ENCODE measurements at regions of chr1 and their contacts with region 1.

Region 1: GRCh38 chr1:166855558-166855957 is 16.3 kb downstream of the POGK start:
- DNase-seq: no peak
- ATAC-seq: no peak
- H3K4me3 Mint-ChIP-seq: no peak overlapping the region
- H3K27ac Mint-ChIP-seq: peak overlapping the region; percentile 53
- H3K4me1 Mint-ChIP-seq: peaks cover 29% of the 10 kb centered on the region
- H3K27me3 Mint-ChIP-seq: no peaks in the 10 kb centered on the region
- CTCF ChIP-seq: no peak

Region 2: DNA sequence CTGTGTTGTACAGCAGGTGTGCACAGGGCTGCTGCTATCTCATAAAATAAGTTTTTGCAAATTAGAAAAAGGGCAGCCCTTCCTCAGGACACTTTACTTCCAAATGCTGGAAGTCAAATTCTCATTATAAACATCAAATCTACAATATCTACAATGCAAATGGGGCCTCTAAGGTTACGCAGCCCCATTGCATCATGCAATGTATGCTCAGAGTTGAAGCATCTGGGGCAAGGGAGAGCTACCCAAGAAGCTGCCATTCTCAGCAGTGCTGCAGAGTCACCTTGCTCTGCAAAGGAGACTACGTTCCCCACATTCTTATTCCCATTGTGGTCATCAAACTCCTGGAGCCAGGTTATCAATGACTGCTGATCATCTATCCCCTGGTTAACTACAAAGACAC is 225.2 kb before region 1 on chr1:
- CTCF ChIA-PET with region 1: no interaction called
- POLR2A ChIA-PET with region 1: no interaction called
- intact Hi-C with region 1: no loop called
- DNase-seq: no peak
- ATAC-seq: no peak
- H3K4me3 Mint-ChIP-seq: no peak overlapping the region
- H3K27ac Mint-ChIP-seq: no peak overlapping the region
- H3K4me1 Mint-ChIP-seq: no peaks in the 10 kb centered on the region
- H3K27me3 Mint-ChIP-seq: peaks cover 4% of the 10 kb centered on the region
- CTCF ChIP-seq: no peak

Region 3: DNA sequence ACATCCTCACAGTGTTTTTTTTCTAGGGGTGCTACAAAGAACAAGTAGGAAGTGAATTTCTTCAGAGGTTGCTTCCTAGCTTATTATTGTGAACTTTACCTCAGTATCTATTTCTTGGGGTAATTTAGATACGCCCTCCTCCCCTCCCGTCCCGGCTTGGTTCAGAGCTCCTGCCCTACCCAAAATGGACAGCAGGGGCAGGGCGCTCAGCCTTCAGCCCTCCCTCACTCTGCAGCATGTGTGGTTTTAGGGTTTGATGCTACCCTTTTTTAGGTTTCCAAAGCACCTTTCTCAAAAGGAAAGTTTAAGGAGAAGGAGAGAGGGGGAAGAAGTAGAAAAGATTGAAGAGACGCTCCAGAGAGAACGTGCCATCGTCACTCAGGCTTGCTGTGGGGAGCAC is 33.2 kb before region 1 on chr1:
- CTCF ChIA-PET with region 1: no interaction called
- POLR2A ChIA-PET with region 1: no interaction called
- intact Hi-C with region 1: no loop called
- DNase-seq: no peak
- ATAC-seq: peak; percentile 51
- H3K4me3 Mint-ChIP-seq: no peak overlapping the region
- H3K27ac Mint-ChIP-seq: no peak overlapping the region
- H3K4me1 Mint-ChIP-seq: no peaks in the 10 kb centered on the region
- H3K27me3 Mint-ChIP-seq: no peaks in the 10 kb centered on the region
- CTCF ChIP-seq: peak; percentile 43

Region 4: DNA sequence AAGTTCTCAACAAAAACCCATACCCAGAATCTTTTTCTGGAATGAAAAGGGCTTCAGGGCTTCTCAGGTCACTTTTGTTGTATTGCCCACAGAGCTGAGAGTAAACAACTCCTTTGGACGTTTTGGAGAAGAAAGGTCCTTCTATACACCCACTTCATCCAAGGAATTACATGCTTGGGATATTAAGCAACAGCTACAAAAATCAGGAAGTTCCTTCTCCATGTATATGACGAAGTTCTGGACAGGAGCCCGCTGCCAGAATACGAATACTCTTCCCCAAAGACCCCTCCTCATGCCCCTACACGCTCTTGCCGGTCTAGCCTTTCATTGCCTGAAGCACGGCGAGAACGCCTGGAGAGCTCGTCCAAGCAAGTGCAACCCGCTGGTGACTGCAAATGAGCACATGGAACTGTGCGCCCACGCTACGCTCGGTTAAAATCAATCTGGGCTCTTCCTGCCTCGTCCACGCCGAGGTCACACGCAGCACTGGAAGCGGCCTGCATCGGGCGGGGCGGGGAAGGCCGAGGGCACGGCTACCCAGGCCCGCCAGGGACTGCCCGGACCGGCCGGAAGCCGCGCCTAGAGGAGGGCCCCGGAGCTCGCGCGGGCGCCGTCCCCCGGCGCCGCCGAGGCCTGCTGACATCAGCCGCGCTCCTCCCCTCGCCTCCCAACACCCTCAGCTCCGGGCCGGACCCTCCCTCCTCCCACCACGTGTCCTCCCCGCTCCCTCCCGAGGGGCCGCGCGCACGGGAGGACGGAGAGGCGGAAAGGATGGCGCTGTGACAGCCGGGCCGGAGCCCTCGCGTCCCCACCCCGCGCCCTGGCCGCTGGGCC is 16.6 kb before region 1 on chr1 and contains the start of gene POGK:
- CTCF ChIA-PET with region 1: interaction called, 3 read pairs
- POLR2A ChIA-PET with region 1: interaction called, 19 read pairs
- intact Hi-C with region 1: no loop called
- DNase-seq: peak; percentile 89
- ATAC-seq: peak; percentile 96
- H3K4me3 Mint-ChIP-seq: peak within 1 kb of the TSS; percentile 84
- H3K27ac Mint-ChIP-seq: peak within 1 kb of the TSS; percentile 94
- H3K4me1 Mint-ChIP-seq: peaks cover 42% of the 10 kb centered on the region
- H3K27me3 Mint-ChIP-seq: no peaks in the 10 kb centered on the region
- CTCF ChIP-seq: no peak
- total RNA-seq, gene POGK: 33.6 to 34.4 TPM

Region 5: DNA sequence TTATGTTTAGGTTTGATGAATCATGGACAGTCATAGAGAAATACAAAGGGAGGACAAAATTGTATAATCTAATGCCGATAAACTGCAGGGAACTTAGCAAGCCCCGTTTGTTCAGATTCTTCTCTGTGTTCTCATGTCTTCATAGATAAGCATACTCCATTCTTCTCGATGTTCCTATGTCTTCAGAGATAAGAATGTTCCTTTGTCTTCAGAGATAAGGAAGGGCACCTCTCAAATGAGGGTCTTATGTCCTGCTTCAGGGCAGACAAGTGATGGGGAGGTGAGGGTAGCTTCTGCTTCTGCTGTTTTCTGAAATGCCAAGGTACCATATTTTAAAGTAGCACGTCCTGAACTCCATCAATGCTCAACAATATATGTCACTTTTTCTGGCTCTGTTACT is 40.2 kb after region 1 on chr1:
- CTCF ChIA-PET with region 1: no interaction called
- POLR2A ChIA-PET with region 1: no interaction called
- intact Hi-C with region 1: no loop called
- DNase-seq: no peak
- ATAC-seq: no peak
- H3K4me3 Mint-ChIP-seq: no peak overlapping the region
- H3K27ac Mint-ChIP-seq: no peak overlapping the region
- H3K4me1 Mint-ChIP-seq: no peaks in the 10 kb centered on the region
- H3K27me3 Mint-ChIP-seq: peaks cover 14% of the 10 kb centered on the region
- CTCF ChIP-seq: no peak

Region 6: DNA sequence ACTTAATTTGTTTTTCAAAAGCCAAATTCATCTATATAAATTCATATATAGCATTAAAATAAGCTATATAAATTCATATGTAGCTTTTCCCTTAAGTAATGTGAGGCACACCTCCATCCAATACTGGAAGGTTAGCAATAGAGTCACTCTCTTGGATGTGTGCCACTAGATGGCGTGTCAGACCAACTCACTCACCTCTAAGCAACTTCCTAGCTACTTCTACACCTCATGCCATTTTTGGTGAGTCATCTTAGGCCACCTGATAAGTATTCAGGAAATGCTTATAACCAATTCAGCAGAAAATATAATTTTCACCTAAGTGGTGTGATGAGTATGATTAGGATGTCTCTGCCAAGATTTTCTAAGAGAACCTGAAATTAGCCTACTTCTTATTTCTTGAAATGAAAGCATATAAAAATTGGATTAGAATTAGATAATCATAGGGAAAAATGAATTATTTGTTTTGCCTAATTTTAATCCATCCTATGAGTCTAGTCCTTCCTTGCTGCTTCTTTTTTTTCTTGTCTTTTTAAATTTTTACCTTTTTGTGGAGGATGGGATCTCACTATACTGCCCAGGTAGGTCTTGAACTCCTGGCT is 54.9 kb after region 1 on chr1:
- CTCF ChIA-PET with region 1: no interaction called
- POLR2A ChIA-PET with region 1: no interaction called
- intact Hi-C with region 1: no loop called
- DNase-seq: peak; percentile 89
- ATAC-seq: peak; percentile 94
- H3K4me3 Mint-ChIP-seq: no peak overlapping the region
- H3K27ac Mint-ChIP-seq: no peak overlapping the region
- H3K4me1 Mint-ChIP-seq: peaks cover 14% of the 10 kb centered on the region
- H3K27me3 Mint-ChIP-seq: peaks cover 4% of the 10 kb centered on the region
- CTCF ChIP-seq: peak; percentile 82

Measured in activated CD8-positive, alpha-beta T cell treated with anti-CD3 and anti-CD28 coated beads for 36 hours (primary cell).